ENCODE measurements at regions of chr11 and their contacts with region 1.

Region 1: GRCh38 chr11:117426269-117426685 is 98.6 kb downstream of the CEP164 start:
- DNase-seq: peak; percentile 57 to 99
- H3K4me3 ChIP-seq: no peak overlapping the region; a peak in 2 of 8 replicates
- H3K27ac ChIP-seq: no peak overlapping the region
- H3K4me1 ChIP-seq: peaks cover 0 to 7% (median 4%) of the 10 kb centered on the region in 4 experiments; a peak in 6 of 7 replicates
- H3K27me3 ChIP-seq: no peaks in the 10 kb centered on the region; a peak in 1 of 7 replicates
- CTCF ChIP-seq: peak; percentile 93 to 99 (median 97)
- EP300 ChIP-seq: no peak
- POLR2A ChIP-seq: no peak
- RAD21 ChIP-seq: peak; percentile 96 to 98

Region 2: DNA sequence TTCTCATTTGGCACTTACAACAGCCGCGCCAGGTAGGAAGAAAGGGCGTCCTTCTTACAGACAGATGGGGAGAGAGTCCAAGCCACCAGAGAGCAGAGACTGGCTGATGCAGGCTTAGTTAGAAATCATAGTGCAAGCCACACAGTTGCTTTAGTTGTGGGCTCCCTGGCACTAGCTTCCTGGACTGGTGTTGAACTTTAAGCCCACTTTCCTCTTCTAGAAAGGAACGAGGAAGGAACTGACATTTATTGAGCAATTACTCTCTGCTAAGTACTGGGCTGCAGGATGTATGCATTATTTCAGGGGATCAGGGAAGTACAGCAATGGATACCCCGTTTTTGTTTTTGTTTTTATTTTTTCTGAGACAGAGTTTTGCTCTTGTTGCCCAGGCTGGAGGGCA is 113.2 kb before region 1 on chr11:
- CTCF ChIA-PET with region 1: no interaction called
- POLR2A ChIA-PET with region 1: no interaction called
- DNase-seq: no peak
- H3K4me3 ChIP-seq: no peak overlapping the region
- H3K27ac ChIP-seq: no peak overlapping the region
- H3K4me1 ChIP-seq: peaks cover 5 to 10% (median 8%) of the 10 kb centered on the region in 4 experiments
- H3K27me3 ChIP-seq: peaks cover 0 to 7% (median 2%) of the 10 kb centered on the region in 4 experiments; a peak in 5 of 7 replicates
- CTCF ChIP-seq: no peak
- EP300 ChIP-seq: no peak
- POLR2A ChIP-seq: no peak
- RAD21 ChIP-seq: no peak

Region 3: GRCh38 chr11:117375960-117376359 is 50.3 kb before region 1 on chr11:
- CTCF ChIA-PET with region 1: interaction called, 11 read pairs
- POLR2A ChIA-PET with region 1: no interaction called
- DNase-seq: no peak
- H3K4me3 ChIP-seq: no peak overlapping the region
- H3K27ac ChIP-seq: no peak overlapping the region
- H3K4me1 ChIP-seq: no peaks in the 10 kb centered on the region
- H3K27me3 ChIP-seq: no peaks in the 10 kb centered on the region
- CTCF ChIP-seq: no peak
- EP300 ChIP-seq: no peak
- POLR2A ChIP-seq: no peak
- RAD21 ChIP-seq: no peak

Region 4: DNA sequence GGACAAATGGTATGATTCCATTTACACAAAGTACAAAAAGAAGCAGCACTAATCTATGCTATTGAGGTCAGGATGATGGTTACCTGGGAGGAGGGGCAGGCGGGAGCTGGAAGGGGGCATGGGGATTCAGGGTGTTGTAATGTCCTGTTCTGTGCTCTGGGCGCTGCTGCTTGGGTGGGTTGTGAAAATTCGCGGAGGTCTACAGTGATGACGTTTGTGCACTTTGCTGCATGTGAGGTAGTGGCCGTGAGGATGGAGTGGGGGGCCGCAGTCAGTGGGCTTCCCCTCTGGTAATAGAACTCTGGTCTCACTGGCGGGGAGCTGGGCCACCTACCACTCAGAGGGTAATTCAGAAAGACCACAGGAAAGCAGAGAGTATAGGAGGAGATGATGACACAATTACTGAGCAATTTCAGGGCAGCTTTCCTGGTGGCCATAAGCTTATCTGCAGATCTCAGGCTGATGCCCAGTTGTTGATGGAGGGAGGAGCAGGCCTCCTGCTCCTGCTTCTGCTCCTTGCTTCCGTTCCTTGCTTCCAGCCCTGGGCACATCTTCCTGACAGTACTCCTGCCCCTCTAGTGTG is 22.9 kb after region 1 on chr11:
- CTCF ChIA-PET with region 1: interaction called, 75 read pairs
- POLR2A ChIA-PET with region 1: no interaction called
- DNase-seq: no peak
- H3K4me3 ChIP-seq: no peak overlapping the region
- H3K27ac ChIP-seq: no peak overlapping the region
- H3K4me1 ChIP-seq: peaks cover 0 to 1% (median 0%) of the 10 kb centered on the region in 4 experiments; a peak in 2 of 7 replicates
- H3K27me3 ChIP-seq: peaks cover 0 to 2% (median 0%) of the 10 kb centered on the region in 4 experiments; a peak in 3 of 7 replicates
- CTCF ChIP-seq: no peak
- EP300 ChIP-seq: no peak
- POLR2A ChIP-seq: no peak
- RAD21 ChIP-seq: no peak

Region 5: DNA sequence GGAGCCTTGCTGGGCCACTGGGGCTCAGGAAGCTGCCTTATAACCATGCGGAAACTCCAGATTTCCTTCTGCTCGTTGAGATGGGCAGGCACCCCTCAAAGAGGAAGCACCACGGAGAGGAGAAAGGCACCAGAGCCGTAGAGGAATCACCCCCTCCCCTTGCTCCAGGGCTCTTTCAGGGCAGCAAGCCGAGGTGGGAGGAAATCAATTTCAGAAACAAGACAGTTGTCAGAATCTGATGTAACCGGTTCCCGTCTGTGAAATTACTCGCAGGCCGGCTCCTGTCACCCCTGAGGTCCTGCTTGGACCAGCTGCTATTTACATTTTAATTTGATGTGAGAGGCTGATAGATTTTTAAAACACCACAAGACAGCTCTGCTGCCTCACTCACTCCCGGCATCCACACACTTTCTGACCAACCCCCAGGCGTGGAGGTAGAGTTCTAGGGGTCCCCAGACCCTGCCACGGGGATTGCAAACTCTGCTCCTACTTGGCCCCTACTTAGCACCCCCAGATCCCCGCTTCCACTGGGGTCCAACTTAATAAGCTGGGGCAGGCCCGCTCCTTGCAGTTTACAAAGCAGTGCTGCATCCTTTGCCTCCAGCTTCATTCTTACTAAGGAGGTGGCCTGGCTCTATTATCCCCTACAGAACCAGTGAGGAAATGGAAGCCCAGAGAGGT is 63.9 kb after region 1 on chr11:
- CTCF ChIA-PET with region 1: interaction called, 15 read pairs
- POLR2A ChIA-PET with region 1: no interaction called
- DNase-seq: no peak
- H3K4me3 ChIP-seq: no peak overlapping the region
- H3K27ac ChIP-seq: no peak overlapping the region
- H3K4me1 ChIP-seq: peaks cover 4 to 14% (median 11%) of the 10 kb centered on the region in 4 experiments
- H3K27me3 ChIP-seq: peaks cover 0 to 5% (median 0%) of the 10 kb centered on the region in 4 experiments; a peak in 2 of 7 replicates
- CTCF ChIP-seq: no peak
- EP300 ChIP-seq: no peak
- POLR2A ChIP-seq: no peak
- RAD21 ChIP-seq: no peak

Region 6: DNA sequence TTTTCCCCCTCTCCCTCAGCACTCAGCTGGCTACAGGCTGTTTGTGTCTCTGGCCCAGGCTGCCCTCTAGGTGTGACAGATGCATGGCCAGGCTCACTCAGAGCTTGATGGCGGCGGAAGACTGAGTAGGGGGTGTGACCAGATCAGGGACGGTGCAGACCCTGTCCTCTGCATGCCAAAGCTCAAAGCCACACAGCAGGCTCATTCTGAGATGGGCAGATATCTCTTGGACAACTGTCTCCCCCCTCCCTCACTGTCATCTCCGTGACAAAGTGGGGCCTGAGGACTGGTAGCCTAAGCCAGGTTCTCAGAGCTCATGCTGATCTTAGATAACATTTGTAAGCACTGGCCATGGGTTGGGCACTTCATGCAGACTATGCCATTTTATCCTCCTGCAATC is 139.4 kb after region 1 on chr11:
- CTCF ChIA-PET with region 1: interaction called, 13 read pairs
- POLR2A ChIA-PET with region 1: no interaction called
- DNase-seq: no peak
- H3K4me3 ChIP-seq: no peak overlapping the region
- H3K27ac ChIP-seq: no peak overlapping the region
- H3K4me1 ChIP-seq: no peaks in the 10 kb centered on the region; a peak in 1 of 7 replicates
- H3K27me3 ChIP-seq: no peaks in the 10 kb centered on the region
- CTCF ChIP-seq: peak; percentile 19 to 31 (median 28); a peak in 3 of 4 replicates
- EP300 ChIP-seq: no peak
- POLR2A ChIP-seq: no peak
- RAD21 ChIP-seq: peak; percentile 32 to 60; a peak in 3 of 4 replicates

Region 7: GRCh38 chr11:117621226-117621625 is 194.9 kb after region 1 on chr11:
- CTCF ChIA-PET with region 1: interaction called, 142 read pairs
- POLR2A ChIA-PET with region 1: no interaction called
- DNase-seq: no peak
- H3K4me3 ChIP-seq: no peak overlapping the region
- H3K27ac ChIP-seq: no peak overlapping the region
- H3K4me1 ChIP-seq: peaks cover 0 to 4% (median 2%) of the 10 kb centered on the region in 4 experiments; a peak in 4 of 7 replicates
- H3K27me3 ChIP-seq: no peaks in the 10 kb centered on the region
- CTCF ChIP-seq: peak; percentile 3 to 59 (median 41)
- EP300 ChIP-seq: no peak
- POLR2A ChIP-seq: no peak
- RAD21 ChIP-seq: peak; percentile 31 to 52; a peak in 3 of 4 replicates

Region 8: GRCh38 chr11:117807482-117808327 is 381.4 kb after region 1 on chr11:
- CTCF ChIA-PET with region 1: interaction called, 65 read pairs
- POLR2A ChIA-PET with region 1: interaction called, 3 read pairs
- DNase-seq: peak in 1 of 2 experiments; percentile 92
- H3K4me3 ChIP-seq: no peak overlapping the region
- H3K27ac ChIP-seq: no peak overlapping the region
- H3K4me1 ChIP-seq: no peaks in the 10 kb centered on the region; a peak in 1 of 7 replicates
- H3K27me3 ChIP-seq: no peaks in the 10 kb centered on the region; a peak in 1 of 7 replicates
- CTCF ChIP-seq: peak; percentile 69 to 83 (median 76)
- EP300 ChIP-seq: no peak
- POLR2A ChIP-seq: no peak
- RAD21 ChIP-seq: peak; percentile 89 to 91

Measured in H1 (cell line).